ENCODE measurements at regions of chr18 and their contacts with region 1.

Region 1: DNA sequence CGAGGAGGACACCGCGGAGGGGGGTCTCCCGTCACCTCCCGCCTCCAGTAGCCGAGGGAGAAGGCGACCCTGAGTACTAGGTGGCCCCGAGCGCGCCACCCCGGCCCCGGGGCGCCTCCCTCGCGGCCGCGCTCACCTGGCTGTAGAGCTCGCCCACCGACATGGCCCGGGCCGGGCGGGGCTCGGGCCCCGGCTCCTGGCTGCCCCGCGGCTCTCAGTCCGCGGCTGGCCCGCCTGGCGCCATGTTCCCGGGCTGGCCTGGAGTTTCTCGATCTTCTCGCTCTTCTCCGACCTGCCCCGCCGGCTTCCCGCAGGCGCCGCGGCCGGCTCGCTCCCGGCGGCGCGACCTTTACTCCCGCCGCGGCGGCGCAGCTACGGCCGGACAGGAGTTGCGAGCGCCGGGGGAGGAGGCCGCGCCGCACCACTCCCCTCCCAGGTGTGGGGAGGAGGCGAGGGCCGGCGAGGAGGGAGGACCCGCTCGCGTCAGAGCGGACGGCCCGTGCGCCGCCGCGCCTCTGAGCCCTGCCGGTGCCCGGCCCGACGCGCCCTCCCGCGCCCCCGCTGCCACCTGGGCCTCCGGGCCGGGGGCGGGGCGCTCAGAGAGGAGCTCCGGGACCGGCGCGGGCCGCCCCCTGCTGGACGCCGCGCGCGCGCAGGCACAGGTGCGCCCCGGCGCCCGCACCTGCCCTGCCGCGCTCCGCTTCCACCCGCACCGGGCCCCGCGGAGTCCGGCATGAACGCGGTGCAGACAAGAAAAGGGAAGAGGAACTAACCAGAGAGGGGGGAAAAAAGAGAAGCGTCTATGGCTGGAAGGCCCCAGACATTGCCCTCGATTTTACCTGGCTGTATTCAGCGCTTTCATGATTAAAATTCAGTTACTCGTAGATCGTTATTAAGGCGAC is at the start of gene MYO5B:
- DNase-seq: peak; percentile 27 to 56
- ATAC-seq: peak; percentile 80 to 91 (median 88)
- H3K4me3 ChIP-seq: peak within 1 kb of the TSS; percentile 68
- H3K27ac ChIP-seq: no peak within 1 kb of the TSS
- H3K4me1 ChIP-seq: peaks cover 3% of the 10 kb centered on the region
- H3K27me3 ChIP-seq: peaks cover 3 to 86% (median 25%) of the 10 kb centered on the region in 3 donors
- CTCF ChIP-seq: peak; percentile 70
- total RNA-seq, gene MYO5B: 0.13 to 0.88 (median 0.45) TPM

Region 2: DNA sequence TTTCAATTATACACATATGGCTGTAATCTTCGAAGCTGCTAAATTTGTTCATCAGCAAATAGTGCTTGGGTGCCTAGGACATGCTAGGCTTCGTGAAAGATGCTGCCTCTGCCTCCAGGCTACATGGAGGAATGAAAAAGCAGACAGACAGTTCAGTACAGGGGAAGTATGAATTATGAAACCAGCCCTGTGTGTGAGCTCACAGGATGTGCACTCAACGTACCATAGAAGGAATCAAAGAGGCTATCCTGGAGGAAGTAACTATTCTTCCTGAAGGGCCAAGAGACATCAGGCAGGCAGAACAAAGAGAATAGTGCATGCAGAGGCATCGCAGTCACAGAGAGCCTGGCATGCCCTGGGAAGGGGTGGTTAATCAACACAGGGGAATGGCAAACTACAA is 795.9 kb before region 1 on chr18:
- intact Hi-C with region 1: no loop called
- DNase-seq: no peak
- ATAC-seq: peak in 2 of 4 donors; percentile 34 to 35
- H3K4me3 ChIP-seq: no peak overlapping the region
- H3K27ac ChIP-seq: no peak overlapping the region
- H3K4me1 ChIP-seq: no peaks in the 10 kb centered on the region
- H3K27me3 ChIP-seq: no peaks in the 10 kb centered on the region
- CTCF ChIP-seq: no peak

Region 3: GRCh38 chr18:49510393-49511115 is 684.3 kb before region 1 on chr18:
- intact Hi-C with region 1: loop called in 1 of 2 experiments (anchors 10 kb)
- DNase-seq: peak; percentile 29 to 56
- ATAC-seq: peak in 2 of 4 donors; percentile 76 to 79
- H3K4me3 ChIP-seq: no peak overlapping the region
- H3K27ac ChIP-seq: no peak overlapping the region
- H3K4me1 ChIP-seq: no peaks in the 10 kb centered on the region
- H3K27me3 ChIP-seq: no peaks in the 10 kb centered on the region
- CTCF ChIP-seq: peak; percentile 76

Region 4: GRCh38 chr18:49813319-49814146 is 381.3 kb before region 1 on chr18 and contains the start of gene ACAA2:
- intact Hi-C with region 1: loop called in 1 of 2 experiments (anchors 10 kb)
- DNase-seq: peak; percentile 90 to 94
- ATAC-seq: peak; percentile 94 to 97 (median 95)
- H3K4me3 ChIP-seq: peak within 1 kb of the TSS; percentile 85
- H3K27ac ChIP-seq: peak within 1 kb of the TSS; percentile 93
- H3K4me1 ChIP-seq: peaks cover 12% of the 10 kb centered on the region
- H3K27me3 ChIP-seq: no peaks in the 10 kb centered on the region
- CTCF ChIP-seq: no peak
- total RNA-seq, gene ACAA2: 75.5 to 158 (median 99.8) TPM

Region 5: GRCh38 chr18:49944663-49945062 is 250.2 kb before region 1 on chr18:
- intact Hi-C with region 1: loop called (anchors 5 to 10 kb)
- DNase-seq: peak in 1 of 2 donors; percentile 19
- ATAC-seq: peak in 2 of 4 donors; percentile 57 to 73
- H3K4me3 ChIP-seq: no peak overlapping the region
- H3K27ac ChIP-seq: no peak overlapping the region
- H3K4me1 ChIP-seq: no peaks in the 10 kb centered on the region
- H3K27me3 ChIP-seq: peaks cover 0 to 3% (median 0%) of the 10 kb centered on the region in 3 donors
- CTCF ChIP-seq: peak; percentile 36

Region 6: GRCh38 chr18:50009773-50010335 is 185.0 kb before region 1 on chr18:
- intact Hi-C with region 1: loop called (anchors 2 to 5 kb)
- DNase-seq: no peak
- ATAC-seq: peak; percentile 65 to 77 (median 70)
- H3K4me3 ChIP-seq: no peak overlapping the region
- H3K27ac ChIP-seq: no peak overlapping the region
- H3K4me1 ChIP-seq: peaks cover 7% of the 10 kb centered on the region
- H3K27me3 ChIP-seq: no peaks in the 10 kb centered on the region
- CTCF ChIP-seq: peak; percentile 56

Region 7: DNA sequence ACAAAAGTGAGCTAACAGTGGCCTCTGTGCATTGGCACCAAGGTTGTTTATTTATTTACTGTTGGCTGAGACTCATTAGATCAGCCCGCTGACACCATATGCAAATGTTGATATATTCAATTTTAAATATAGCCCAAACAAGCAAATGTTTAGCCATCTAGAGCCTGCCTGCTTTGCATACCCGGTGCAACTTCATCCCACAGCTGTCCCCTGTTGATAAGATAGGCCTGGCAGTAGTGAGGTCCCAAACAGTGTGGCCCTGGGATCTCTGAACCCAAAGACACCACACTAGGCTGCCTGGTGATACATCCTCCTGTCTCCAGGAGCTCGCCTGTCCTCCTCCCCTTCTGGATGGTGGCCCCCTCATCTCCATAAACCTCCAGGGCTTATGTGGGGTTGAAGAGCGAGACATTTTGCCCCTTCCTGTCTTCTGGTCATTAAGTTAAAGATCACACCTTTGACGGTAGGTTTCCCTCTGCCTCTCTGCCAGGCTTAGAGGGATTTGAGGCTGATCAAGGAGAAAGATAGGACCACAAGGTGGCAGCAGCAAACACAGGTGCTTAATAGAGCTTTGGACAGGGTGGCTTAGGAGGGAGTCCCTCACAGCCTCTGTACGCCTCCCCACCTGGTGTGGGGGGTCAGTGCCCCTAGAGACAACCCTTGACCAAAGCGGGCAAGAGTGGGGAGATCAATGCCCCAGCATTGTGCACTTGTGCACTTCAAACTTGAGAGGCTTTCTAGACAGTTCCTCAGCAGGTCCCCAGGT is 23.7 kb after region 1 on chr18:
- intact Hi-C with region 1: no loop called
- DNase-seq: no peak
- ATAC-seq: no peak
- H3K4me3 ChIP-seq: no peak overlapping the region
- H3K27ac ChIP-seq: no peak overlapping the region
- H3K4me1 ChIP-seq: no peaks in the 10 kb centered on the region
- H3K27me3 ChIP-seq: no peaks in the 10 kb centered on the region
- CTCF ChIP-seq: peak; percentile 20